Lower leg skin (tissue), 4 donors: ENCODE measurements at regions of chr19 and their contacts with region 1.

Region 1: GRCh38 chr19:9785367-9786331 is 17.1 kb upstream of the ZNF846 start:
- DNase-seq: peak; percentile 96 to 99
- H3K4me3 ChIP-seq: peak overlapping the region; percentile 55
- CTCF ChIP-seq: no peak
- POLR2A ChIP-seq: peak in 1 of 2 donors; percentile 44

Region 2: GRCh38 chr19:9205501-9206113 is 580.0 kb before region 1 on chr19:
- intact Hi-C with region 1: loop called (anchors 10 kb)
- DNase-seq: peak; percentile 38 to 91
- H3K4me3 ChIP-seq: no peak overlapping the region
- CTCF ChIP-seq: peak in 1 of 3 donors; percentile 54
- POLR2A ChIP-seq: no peak

Region 3: DNA sequence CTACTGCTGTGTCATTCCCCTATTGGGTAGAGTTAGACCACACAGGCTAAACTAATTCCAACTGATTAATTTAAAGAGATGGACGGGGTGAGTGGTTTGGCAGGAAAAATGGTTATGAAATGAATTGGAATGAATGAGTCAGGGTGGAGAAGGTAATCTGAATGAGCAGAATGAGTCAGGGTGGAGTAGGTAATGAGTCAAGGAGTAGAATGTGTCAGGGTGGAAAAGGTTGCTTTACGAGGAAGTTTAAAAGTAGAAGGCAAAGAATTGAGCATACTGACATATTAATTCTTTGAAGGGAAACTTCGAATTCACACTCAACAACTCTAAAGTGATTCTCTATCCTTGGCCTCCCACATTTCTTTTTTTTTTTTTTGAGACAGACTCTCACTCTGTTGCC is 188.6 kb before region 1 on chr19:
- intact Hi-C with region 1: loop called (anchors 10 kb)
- DNase-seq: no peak
- H3K4me3 ChIP-seq: no peak overlapping the region
- CTCF ChIP-seq: no peak
- POLR2A ChIP-seq: no peak

Region 4: DNA sequence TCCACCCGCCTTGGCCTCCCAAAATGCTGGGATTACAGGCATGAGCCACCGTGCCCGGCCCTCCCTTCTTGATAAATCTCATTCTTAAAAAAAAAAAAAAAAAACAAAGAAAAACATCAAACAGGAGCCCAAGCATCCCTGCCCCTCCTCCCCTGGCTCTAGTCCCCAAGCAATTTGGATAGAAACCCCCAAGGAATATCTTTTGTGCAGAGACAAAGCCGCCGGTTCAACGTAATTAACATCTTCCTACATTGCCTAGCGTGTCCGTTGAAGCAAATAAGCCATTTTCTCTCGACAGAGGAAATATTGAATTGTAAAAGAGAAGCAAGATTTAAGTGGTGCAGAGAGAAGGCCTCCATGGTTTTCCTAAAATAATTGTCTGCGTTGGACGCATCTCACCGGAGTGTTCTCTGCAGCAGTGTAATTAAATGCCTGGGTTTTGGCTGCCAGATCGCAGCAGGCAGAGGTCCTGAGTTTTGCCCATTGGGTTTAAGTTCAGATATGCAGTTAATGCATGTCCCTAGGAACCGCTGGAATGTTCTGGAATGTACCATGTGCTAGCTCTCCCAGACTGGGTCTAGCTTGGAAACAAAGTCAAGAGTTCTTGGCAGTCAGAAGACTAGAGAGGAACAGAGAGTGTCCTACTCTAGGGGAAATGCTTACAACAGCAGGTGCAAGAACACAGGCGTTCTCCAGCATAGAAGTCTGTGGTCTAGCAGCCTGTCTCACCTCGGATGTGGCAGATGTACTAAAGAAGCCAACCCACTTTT is 80.3 kb after region 1 on chr19:
- intact Hi-C with region 1: no loop called
- DNase-seq: no peak
- H3K4me3 ChIP-seq: no peak overlapping the region
- CTCF ChIP-seq: no peak
- POLR2A ChIP-seq: no peak

Region 5: GRCh38 chr19:9885077-9885552 is 99.5 kb after region 1 on chr19:
- intact Hi-C with region 1: no loop called
- DNase-seq: peak in 1 of 2 donors; percentile 26
- H3K4me3 ChIP-seq: no peak overlapping the region
- CTCF ChIP-seq: no peak
- POLR2A ChIP-seq: no peak